CD8-positive, alpha-beta T cell (primary cell): ENCODE measurements at regions of chr2 and their contacts with region 1.

Region 1: DNA sequence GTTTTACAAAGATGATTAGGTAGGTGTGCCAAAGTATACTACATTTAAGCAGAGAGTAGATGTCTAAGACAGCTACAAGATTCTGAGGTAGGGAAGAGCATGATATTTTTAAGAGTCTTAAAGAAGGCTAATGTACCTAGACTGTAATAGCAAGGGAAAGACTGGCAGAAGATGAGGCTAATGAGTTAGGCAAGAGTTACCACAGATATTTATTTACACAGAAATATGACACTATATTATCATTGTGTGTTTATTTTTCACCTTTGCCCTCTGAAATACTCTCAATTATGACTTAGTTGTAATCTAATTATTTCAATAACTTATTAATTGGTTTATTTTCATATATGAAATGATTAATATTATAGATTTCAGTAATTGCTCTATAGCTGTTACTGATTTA is 206.7 kb downstream of the SLC4A10 start:
- DNase-seq: no peak
- ATAC-seq: no peak
- H3K4me3 ChIP-seq: no peak overlapping the region
- H3K4me3 Mint-ChIP-seq: no peak overlapping the region
- H3K27ac ChIP-seq: no peak overlapping the region
- H3K27ac Mint-ChIP-seq: no peak overlapping the region
- H3K4me1 ChIP-seq: no peaks in the 10 kb centered on the region
- H3K4me1 Mint-ChIP-seq: no peaks in the 10 kb centered on the region
- H3K27me3 ChIP-seq: no peaks in the 10 kb centered on the region
- H3K27me3 Mint-ChIP-seq: peaks cover 3% of the 10 kb centered on the region
- CTCF ChIP-seq: no peak

Region 2: DNA sequence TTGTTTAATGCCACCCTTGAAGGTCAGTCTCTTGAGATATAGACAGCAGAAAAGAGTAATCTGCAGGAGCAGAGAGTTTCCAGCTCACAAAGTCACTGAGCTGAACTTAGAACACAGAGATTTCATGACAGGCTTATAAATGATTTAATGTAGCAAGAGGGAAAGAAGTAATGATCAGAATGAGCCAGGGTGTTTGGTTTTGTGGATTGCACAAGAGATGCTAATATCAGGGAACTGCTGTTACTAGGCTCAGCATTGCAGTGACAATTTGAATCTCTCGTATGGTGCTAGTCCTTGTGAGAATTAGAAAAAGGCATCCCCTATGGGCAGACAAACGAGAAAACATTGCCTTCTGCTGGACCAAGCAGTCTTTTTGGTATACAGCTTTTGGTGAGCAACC is 1569.2 kb before region 1 on chr2:
- CTCF ChIA-PET with region 1: no interaction called
- POLR2A ChIA-PET with region 1: no interaction called
- intact Hi-C with region 1: loop called in 1 of 2 experiments (anchors 5 kb)
- DNase-seq: no peak
- ATAC-seq: no peak
- H3K4me3 ChIP-seq: no peak overlapping the region
- H3K4me3 Mint-ChIP-seq: no peak overlapping the region
- H3K27ac ChIP-seq: no peak overlapping the region
- H3K27ac Mint-ChIP-seq: no peak overlapping the region
- H3K4me1 ChIP-seq: no peaks in the 10 kb centered on the region
- H3K4me1 Mint-ChIP-seq: peaks cover 12% of the 10 kb centered on the region
- H3K27me3 ChIP-seq: no peaks in the 10 kb centered on the region
- H3K27me3 Mint-ChIP-seq: peaks cover 2% of the 10 kb centered on the region
- CTCF ChIP-seq: no peak

Region 3: DNA sequence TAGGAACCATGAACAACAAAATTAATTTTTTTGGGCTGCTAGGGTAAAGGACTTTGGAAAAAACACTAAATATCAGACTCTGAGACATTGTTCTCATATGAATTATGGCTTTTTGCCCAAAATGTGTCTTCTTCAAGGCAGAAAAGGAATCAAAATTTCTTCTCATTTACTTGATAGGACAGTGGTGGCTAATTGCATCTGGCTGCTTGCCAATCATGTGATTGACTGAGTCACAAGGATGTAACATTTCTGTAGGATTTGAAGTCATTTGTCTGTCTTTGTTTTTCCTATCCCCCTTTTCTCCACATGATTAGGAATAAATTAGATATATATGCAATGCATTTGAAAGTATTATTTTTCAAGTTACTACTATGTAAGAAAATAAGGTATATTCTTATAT is 76.6 kb before region 1 on chr2:
- CTCF ChIA-PET with region 1: no interaction called
- POLR2A ChIA-PET with region 1: no interaction called
- intact Hi-C with region 1: no loop called
- DNase-seq: no peak
- ATAC-seq: no peak
- H3K4me3 ChIP-seq: no peak overlapping the region
- H3K4me3 Mint-ChIP-seq: no peak overlapping the region
- H3K27ac ChIP-seq: no peak overlapping the region
- H3K27ac Mint-ChIP-seq: no peak overlapping the region
- H3K4me1 ChIP-seq: no peaks in the 10 kb centered on the region
- H3K4me1 Mint-ChIP-seq: no peaks in the 10 kb centered on the region
- H3K27me3 ChIP-seq: no peaks in the 10 kb centered on the region
- H3K27me3 Mint-ChIP-seq: no peaks in the 10 kb centered on the region
- CTCF ChIP-seq: no peak